K562 (cell line): ENCODE measurements at regions of chr4 and their contacts with region 1.

Region 1: DNA sequence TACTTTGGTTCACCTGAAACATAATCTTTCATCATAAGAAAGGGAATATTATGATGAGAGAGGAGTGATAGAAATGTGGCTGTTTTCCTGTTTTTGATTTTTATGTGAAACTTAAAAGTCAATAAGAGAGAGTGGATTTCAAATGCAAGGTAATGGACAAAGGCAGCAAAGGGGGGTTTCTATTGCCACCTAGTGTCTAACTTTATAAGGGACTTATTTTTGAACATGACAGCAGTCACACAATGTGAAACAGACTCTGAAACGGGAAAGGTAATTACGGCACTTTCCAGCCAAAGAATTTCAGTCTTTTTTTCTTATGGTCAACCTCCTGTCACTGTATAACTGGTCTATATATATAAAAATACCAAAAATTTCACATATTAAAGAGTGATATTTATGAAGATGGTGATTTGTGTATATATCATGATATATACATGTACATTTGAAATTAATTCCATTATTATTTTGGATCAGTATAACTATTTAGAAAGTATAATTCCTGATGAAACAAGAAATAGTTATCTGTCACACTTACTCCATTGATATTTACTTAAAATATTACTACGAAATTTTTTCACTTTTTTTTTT is 127.1 kb downstream of the FBXO8 start:
- DNase-seq: peak; percentile 39 to 80 (median 48)
- ATAC-seq: peak; percentile 88
- H3K4me3 ChIP-seq: no peak overlapping the region
- H3K27ac ChIP-seq: peak overlapping the region; percentile 59; the same call in 2 of the 3 replicates
- H3K4me1 ChIP-seq: peaks cover 5 to 15% of the 10 kb centered on the region in 2 experiments
- H3K27me3 ChIP-seq: no peaks in the 10 kb centered on the region
- CTCF ChIP-seq: peak; percentile 56 to 84 (median 59)
- EP300 ChIP-seq: no peak
- POLR2A ChIP-seq: no peak
- RAD21 ChIP-seq: peak; percentile 68 to 72

Region 2: GRCh38 chr4:173505924-173506518 is 650.3 kb before region 1 on chr4:
- CTCF ChIA-PET with region 1: interaction called, 4 read pairs
- POLR2A ChIA-PET with region 1: no interaction called
- in situ Hi-C with region 1: no loop called
- intact Hi-C with region 1: loop called (anchors 2 kb)
- DNase-seq: peak; percentile 44 to 78 (median 58)
- ATAC-seq: peak; percentile 98
- H3K4me3 ChIP-seq: no peak overlapping the region
- H3K27ac ChIP-seq: no peak overlapping the region
- H3K4me1 ChIP-seq: peaks cover 0 to 11% of the 10 kb centered on the region in 2 experiments; a peak in 2 of 5 replicates
- H3K27me3 ChIP-seq: no peaks in the 10 kb centered on the region; a peak in 1 of 5 replicates
- CTCF ChIP-seq: peak; percentile 77 to 83 (median 82)
- EP300 ChIP-seq: no peak
- POLR2A ChIP-seq: no peak
- RAD21 ChIP-seq: peak; percentile 70 to 79

Region 3: DNA sequence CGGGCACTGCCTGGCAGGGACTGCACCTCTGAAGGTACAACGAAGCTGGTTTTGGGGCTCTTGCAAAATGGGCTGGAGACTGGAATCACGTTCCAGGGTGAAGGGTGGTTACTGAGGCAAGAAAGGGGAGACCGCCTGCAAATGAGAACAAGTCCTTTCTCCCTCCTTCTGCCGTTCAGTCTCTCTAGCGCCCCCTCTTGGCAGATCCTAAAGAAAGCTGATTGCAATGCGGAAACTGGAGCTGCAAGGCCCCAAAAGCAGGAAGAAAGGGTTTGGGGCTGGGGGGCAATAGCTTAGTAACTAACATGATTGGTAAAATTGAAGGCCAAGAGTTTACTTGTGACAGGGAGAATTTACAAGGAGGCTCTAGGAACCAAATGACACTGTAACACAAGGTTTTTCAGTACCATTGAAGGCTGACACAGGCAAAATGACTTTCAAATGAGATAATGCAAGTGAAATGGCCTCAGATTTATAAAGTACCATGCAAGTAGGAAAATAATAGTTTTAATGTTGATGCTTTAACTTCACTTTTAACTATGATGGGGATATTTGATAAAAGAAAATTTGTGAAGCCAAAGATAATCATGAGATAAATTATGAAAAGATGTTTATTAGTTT is 403.6 kb before region 1 on chr4:
- CTCF ChIA-PET with region 1: no interaction called
- POLR2A ChIA-PET with region 1: no interaction called
- in situ Hi-C with region 1: no loop called
- intact Hi-C with region 1: loop called (anchors 10 kb)
- DNase-seq: peak; percentile 40 to 74 (median 57)
- ATAC-seq: peak; percentile 84
- H3K4me3 ChIP-seq: no peak overlapping the region
- H3K27ac ChIP-seq: no peak overlapping the region
- H3K4me1 ChIP-seq: no peaks in the 10 kb centered on the region
- H3K27me3 ChIP-seq: no peaks in the 10 kb centered on the region
- CTCF ChIP-seq: peak; percentile 66 to 78 (median 72)
- EP300 ChIP-seq: no peak
- POLR2A ChIP-seq: no peak
- RAD21 ChIP-seq: peak in 1 of 2 experiments; percentile 44; a peak in 2 of 4 replicates

Region 4: DNA sequence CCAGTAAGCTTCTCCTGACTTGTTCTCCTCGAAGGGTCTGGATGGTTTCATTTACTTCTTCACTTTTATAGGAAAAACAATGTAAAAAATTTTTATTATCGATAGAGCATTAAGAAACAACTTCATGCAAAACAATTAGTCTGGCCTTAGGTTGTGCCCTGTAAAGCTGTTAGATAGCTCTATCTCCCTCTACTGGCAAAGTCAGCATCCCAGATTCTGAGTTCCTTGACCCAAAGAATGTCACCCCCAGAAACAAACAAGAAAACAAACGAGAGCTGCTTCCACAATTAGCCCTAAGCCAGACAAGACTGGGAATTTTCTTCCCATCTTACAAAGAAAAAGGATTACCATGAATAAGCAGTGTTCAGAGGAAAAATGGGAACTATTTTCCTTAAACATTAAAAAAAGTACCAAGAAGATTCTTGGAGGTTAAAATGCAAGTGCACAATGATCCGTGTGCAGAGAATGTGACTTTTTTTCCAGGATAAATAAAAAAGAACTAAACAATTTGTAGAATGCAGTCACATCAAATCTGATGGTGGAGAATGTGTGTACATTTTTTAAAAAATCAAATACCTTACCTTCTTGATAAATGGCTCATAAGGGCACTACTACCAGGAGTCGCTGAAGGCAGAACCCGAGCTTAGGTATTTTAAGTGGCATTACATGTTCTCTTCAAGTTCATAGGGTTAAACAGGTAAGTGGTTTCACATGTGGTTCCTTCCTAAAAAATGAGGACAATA is 166.0 kb before region 1 on chr4:
- CTCF ChIA-PET with region 1: no interaction called
- POLR2A ChIA-PET with region 1: no interaction called
- in situ Hi-C with region 1: no loop called
- intact Hi-C with region 1: loop called (anchors 1 kb)
- DNase-seq: peak in 2 of 4 experiments; percentile 15 to 41
- ATAC-seq: peak; percentile 88
- H3K4me3 ChIP-seq: no peak overlapping the region
- H3K27ac ChIP-seq: no peak overlapping the region
- H3K4me1 ChIP-seq: peaks cover 0 to 3% of the 10 kb centered on the region in 2 experiments; a peak in 2 of 5 replicates
- H3K27me3 ChIP-seq: no peaks in the 10 kb centered on the region
- CTCF ChIP-seq: peak; percentile 38 to 54 (median 50); a peak in 5 of 6 replicates
- EP300 ChIP-seq: no peak
- POLR2A ChIP-seq: no peak
- RAD21 ChIP-seq: peak; percentile 43 to 44; a peak in 3 of 4 replicates

Region 5: GRCh38 chr4:174005422-174005821 is 150.9 kb before region 1 on chr4:
- CTCF ChIA-PET with region 1: no interaction called
- POLR2A ChIA-PET with region 1: no interaction called
- in situ Hi-C with region 1: no loop called
- intact Hi-C with region 1: loop called (anchors 5 kb)
- DNase-seq: peak in 1 of 4 experiments; percentile 3
- ATAC-seq: no peak
- H3K4me3 ChIP-seq: no peak overlapping the region
- H3K27ac ChIP-seq: no peak overlapping the region
- H3K4me1 ChIP-seq: no peaks in the 10 kb centered on the region; a peak in 1 of 5 replicates
- H3K27me3 ChIP-seq: no peaks in the 10 kb centered on the region
- CTCF ChIP-seq: no peak
- EP300 ChIP-seq: no peak
- POLR2A ChIP-seq: no peak
- RAD21 ChIP-seq: no peak